Posterior vena cava (tissue), 2 donors: ENCODE measurements at regions of chr14 and their contacts with region 1.

Region 1: DNA sequence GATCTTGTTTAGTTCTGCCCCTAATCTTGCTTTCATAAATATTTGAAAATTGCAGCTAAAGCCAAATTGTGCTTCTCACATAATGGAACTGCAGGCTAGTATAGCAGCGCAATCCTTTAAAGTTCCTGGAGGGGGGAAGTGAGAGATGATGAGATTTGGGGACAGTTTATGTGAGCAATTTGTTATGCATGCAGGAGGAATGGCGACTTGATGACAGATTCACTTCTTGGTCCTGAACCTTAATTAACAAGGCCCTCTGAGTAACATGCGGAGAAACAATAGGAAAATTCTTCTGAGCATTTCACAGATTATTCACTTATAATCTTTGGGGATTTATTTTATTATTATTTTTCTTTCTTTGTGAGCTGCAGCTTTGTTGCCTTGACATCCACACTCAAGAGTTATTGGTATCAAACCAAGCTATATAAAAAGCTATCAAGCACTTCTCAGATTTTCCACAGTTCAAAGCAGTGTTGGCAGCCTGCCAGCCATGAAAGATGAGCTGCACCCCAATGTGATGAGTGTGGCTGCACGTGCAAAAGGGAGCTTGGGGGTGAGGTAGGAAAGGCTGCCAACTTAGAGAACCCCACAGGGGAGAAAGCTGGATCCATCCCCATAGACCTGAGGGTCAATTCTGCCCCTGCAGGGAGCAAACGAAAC is 1662.2 kb upstream of the FLRT2 start:
- DNase-seq: no peak

Region 2: GRCh38 chr14:83899706-83900105 is 32.0 kb after region 1 on chr14:
- intact Hi-C with region 1: loop called in 1 of 2 experiments (anchors 1 kb)
- DNase-seq: no peak